Activated CD4-positive, alpha-beta memory T cell treated with anti-CD3 and anti-CD28 coated beads, Interleukin-2, amount 10 ng/mL, durations not matched to agents 7 days and 5 days (primary cell): ENCODE measurements at regions of chr5 and their contacts with region 1.

Region 1: DNA sequence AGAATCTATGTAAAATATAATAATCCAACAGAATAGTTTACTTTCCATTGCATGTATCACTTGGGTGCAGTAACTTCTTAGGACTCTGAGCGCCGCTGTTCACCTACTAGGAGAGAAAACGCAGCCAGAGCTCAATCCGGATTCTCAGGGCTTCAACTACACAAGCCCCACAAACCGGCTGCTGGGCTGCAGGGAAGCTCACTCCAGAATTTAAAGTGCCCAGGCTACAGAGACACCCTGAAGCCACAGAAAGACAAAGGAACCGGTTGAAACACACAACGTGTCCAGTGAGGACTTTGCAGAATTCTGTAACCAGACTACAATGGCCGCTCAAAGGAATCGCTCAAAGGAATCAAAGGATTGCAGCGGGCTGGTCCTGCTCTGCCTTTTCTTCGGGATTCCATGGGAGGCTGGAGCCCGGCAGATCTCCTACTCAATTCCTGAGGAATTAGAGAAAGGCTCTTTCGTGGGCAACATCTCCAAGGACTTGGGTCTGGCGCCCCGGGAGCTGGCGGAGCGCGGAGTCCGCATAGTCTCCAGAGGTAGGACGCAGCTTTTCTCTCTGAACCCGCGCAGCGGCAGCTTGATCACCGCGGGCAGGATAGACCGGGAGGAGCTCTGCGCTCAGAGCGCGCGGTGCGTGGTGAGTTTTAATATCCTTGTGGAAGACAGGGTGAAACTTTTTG is at the start of gene PCDHGA10:
- DNase-seq: peak; percentile 66
- H3K4me3 Mint-ChIP-seq: peak within 1 kb of the TSS; percentile 65
- H3K27ac Mint-ChIP-seq: peak within 1 kb of the TSS; percentile 34
- H3K4me1 Mint-ChIP-seq: peaks cover 21% of the 10 kb centered on the region
- H3K27me3 Mint-ChIP-seq: peaks cover 62% of the 10 kb centered on the region
- total RNA-seq, gene PCDHGA10: 0.05 TPM in 1 of 2 experiments, not detected in the other

Region 2: DNA sequence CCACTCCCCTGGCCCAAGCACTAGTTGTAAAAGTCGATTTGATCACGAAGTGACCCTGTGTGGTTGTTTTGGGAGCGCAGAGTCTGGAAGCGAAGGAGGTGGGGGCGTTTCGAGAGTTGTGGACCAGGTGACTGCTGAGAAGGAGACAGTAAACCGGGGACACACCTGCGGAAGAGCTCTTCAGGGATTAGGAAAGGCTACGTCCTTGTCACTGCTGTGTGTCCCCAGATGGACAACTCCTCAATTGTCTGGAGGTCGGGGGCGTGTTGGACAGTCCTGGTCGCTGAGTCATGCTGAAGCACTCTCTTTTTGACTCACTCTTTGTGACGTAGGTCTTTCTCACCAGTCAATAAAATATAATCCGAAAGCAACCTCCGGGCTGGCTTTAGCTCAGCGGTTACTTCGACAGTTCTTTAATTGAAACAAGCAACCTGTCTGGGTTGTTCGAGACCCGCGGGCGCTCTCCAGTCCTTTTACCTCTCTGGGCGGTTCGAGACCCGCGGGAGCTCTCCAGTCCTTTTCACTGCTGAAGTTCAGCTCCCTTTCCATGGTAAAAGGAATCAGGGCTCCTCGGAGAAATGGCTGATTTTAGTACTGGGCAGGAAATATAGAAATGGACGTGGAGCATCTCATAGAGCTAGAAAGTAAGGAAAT is 702.0 kb before region 1 on chr5:
- CTCF ChIA-PET with region 1: no interaction called
- POLR2A ChIA-PET with region 1: no interaction called
- DNase-seq: peak; percentile 91
- H3K4me3 Mint-ChIP-seq: peak overlapping the region; percentile 80
- H3K27ac Mint-ChIP-seq: peak overlapping the region; percentile 90
- H3K4me1 Mint-ChIP-seq: peaks cover 23% of the 10 kb centered on the region
- H3K27me3 Mint-ChIP-seq: peaks cover 5% of the 10 kb centered on the region

Region 3: DNA sequence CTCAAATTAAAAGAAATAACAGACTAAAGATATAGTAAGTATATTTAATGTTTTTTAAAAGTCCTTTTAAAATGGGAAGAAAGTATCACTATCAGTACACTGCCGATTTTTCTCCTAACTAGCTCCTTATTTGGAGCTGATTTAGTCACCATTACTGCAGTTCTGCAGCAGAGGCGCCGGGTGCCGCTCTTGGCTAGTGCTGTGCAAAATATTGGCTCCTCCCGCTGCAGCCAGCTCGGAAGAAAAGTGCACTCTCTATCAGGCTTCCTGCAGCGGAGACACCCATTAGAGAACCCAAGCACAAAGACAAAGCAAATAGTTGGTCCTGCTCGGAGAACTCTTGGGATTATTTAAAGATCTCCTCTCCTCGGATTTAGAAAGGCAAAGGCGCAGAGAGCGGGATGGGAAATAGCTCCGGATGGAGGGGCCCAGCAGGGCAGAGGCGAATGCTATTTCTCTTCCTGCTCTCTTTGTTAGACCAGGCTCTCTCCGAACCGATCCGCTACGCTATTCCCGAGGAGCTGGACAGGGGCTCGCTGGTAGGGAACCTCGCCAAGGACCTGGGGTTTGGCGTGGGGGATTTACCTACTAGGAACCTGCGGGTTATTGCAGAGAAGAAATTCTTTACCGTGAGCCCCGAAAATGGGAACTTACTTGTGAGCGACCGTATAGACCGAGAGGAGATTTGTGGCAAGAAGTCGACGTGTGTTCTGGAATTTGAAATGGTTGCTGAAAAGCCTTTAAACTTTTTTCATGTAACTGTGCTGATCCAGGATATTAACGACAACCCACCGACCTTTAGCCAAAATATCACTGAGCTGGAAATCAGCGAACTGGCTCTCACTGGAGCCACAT is 42.8 kb before region 1 on chr5 and contains the start of gene PCDHGB3:
- CTCF ChIA-PET with region 1: interaction called, 13 read pairs
- POLR2A ChIA-PET with region 1: no interaction called
- DNase-seq: peak; percentile 33
- H3K4me3 Mint-ChIP-seq: peak within 1 kb of the TSS; percentile 46
- H3K27ac Mint-ChIP-seq: no peak within 1 kb of the TSS
- H3K4me1 Mint-ChIP-seq: no peaks in the 10 kb centered on the region
- H3K27me3 Mint-ChIP-seq: peaks cover 39% of the 10 kb centered on the region
- total RNA-seq, gene PCDHGB3: 0.10 to 0.25 TPM

Region 4: GRCh38 chr5:141392429-141393198 is 20.4 kb before region 1 on chr5 and contains the start of gene PCDHGA8:
- CTCF ChIA-PET with region 1: interaction called, 11 read pairs
- POLR2A ChIA-PET with region 1: no interaction called
- DNase-seq: no peak
- H3K4me3 Mint-ChIP-seq: no peak within 1 kb of the TSS
- H3K27ac Mint-ChIP-seq: no peak within 1 kb of the TSS
- H3K4me1 Mint-ChIP-seq: no peaks in the 10 kb centered on the region
- H3K27me3 Mint-ChIP-seq: peaks cover 36% of the 10 kb centered on the region
- total RNA-seq, gene PCDHGA8: not detected

Region 5: DNA sequence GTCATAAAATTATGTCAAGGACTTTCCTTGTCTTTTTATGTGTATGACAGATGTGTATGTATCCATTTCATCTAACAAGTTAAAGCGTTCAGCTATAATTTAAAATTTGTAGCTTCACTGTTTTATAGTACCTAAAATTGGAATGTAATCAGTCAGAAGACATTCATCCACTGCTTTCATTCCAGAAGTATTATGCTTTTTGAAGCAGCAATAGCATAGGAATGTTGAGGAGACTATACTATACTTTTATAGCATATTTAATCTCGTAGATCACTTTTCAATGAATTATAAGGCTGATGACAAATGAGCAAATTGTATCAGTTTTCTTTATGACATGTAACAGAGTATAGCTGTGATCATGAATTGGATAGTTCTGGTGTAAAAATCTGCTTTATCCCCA is 24.2 kb after region 1 on chr5:
- CTCF ChIA-PET with region 1: no interaction called
- POLR2A ChIA-PET with region 1: no interaction called
- DNase-seq: no peak
- H3K4me3 Mint-ChIP-seq: no peak overlapping the region
- H3K27ac Mint-ChIP-seq: no peak overlapping the region
- H3K4me1 Mint-ChIP-seq: no peaks in the 10 kb centered on the region
- H3K27me3 Mint-ChIP-seq: peaks cover 11% of the 10 kb centered on the region

Region 6: DNA sequence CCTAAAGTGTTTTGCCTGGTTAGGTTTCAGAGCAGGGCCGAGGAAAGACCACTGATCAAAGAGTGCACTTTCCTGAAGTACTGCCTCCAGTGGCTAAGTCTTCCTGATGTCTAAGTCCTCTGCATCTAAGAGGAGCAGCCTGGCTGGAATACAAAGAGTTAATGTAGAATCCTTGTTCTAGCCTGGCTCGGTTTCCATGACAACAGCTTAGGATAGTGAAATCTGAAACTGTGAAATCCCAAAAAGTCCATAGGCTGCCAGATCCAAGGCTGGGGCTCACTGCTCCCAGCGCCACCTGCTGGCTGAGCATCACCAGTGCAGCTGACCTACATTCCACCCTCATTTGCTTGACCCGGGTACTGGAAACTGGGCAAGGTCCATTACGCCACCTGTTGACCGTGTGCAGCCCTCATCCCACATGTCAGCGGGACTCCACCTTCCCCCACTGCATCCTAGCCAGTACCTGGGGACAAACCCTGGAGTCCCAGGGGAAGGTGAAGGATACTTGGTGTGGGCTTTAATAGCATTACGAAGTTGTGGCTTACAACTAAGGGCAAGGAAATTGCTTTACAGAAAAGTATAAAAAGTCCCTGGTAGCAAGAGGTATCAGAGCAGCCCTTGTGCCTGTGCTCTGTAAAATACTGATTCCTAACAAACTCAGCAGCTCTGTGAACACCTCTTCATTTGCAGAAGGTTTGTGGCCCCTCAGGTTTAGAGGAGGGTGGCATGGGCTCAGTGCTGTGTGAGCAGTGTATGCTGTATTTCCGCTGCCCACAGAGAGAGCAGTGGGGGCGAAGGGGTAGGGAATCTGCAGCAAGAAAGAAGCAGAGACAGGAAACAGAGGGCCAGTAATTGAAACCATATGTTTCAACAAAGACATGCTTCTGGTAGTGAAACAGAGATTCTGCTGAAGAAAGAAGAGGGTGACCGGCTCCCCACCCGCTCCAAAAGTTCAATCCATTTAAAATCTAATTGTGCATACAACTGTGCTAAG is 111.9 kb after region 1 on chr5:
- CTCF ChIA-PET with region 1: interaction called, 12 read pairs
- POLR2A ChIA-PET with region 1: interaction called, 3 read pairs
- DNase-seq: peak; percentile 51
- H3K4me3 Mint-ChIP-seq: no peak overlapping the region
- H3K27ac Mint-ChIP-seq: no peak overlapping the region
- H3K4me1 Mint-ChIP-seq: peaks cover 25% of the 10 kb centered on the region
- H3K27me3 Mint-ChIP-seq: no peaks in the 10 kb centered on the region

Region 7: DNA sequence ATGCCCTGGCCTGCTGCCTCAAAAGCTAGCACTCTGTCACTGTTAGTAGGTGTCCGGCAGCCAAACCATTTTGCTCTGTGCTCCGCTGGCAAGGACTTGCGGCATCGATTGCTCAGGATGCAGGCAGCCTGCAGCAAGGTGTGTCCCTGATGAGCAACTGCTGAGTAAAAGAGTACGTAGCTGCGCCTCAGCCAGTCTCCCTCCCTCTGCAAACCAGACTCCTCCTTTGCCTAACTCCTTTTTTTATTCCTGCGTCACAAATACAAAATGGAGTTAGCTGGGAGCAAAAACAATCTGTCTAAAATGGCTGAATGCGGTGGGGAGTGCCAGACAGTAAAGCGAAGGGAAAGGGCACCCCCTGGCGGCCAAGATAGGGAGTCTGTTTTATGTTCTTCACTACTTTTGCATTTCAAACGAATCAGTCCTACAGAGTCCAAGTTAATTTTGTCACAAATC is 144.7 kb after region 1 on chr5:
- CTCF ChIA-PET with region 1: interaction called, 14 read pairs
- POLR2A ChIA-PET with region 1: no interaction called
- DNase-seq: peak; percentile 79
- H3K4me3 Mint-ChIP-seq: no peak overlapping the region
- H3K27ac Mint-ChIP-seq: peak overlapping the region; percentile 62
- H3K4me1 Mint-ChIP-seq: peaks cover 28% of the 10 kb centered on the region
- H3K27me3 Mint-ChIP-seq: no peaks in the 10 kb centered on the region